A549 (cell line): ENCODE measurements at regions of chr3 and their contacts with region 1.

Region 1: GRCh38 chr3:14203521-14204079 is 25.0 kb downstream of the LSM3 start:
- DNase-seq: peak; percentile 79
- ATAC-seq: peak; percentile 84 to 92
- H3K4me3 ChIP-seq: no peak overlapping the region
- H3K27ac ChIP-seq: no peak overlapping the region
- H3K4me1 ChIP-seq: no peaks in the 10 kb centered on the region
- CTCF ChIP-seq: peak; percentile 86
- EP300 ChIP-seq: no peak
- POLR2A ChIP-seq: no peak
- RAD21 ChIP-seq: peak; percentile 83 to 86

Region 2: DNA sequence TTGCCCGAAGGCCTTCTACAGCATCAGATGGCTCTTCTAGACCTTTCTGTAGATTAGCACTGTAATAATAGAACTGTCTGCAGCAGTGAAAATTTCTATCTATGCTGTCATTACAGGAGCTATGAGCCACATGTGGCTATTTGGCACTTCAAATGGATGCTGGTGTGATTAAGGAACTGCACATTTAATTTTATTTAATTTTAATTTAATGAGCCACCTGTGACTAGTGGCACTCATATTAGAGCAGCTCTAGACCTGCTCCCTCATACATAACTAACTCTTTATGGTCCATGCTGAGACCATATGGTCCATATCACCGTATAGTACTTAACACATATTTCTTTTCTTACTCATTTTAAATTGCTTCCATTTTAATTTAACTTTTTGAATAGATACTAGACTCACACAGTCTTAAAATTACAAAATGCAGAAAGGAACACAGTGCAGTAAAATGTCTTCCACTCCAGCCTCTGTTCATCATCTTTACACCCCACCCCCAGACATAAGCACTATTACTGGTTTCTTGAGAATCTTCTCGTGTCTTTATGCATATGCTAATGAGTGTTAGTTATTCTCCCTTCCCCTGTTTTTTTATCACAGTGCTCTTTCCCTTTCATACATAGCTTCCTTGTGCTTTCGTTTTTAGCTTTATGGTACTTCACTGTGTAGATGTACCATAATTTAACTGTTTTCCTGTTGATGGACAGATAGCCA is 15.4 kb before region 1 on chr3:
- CTCF ChIA-PET with region 1: interaction called, 20 read pairs
- POLR2A ChIA-PET with region 1: no interaction called
- DNase-seq: no peak
- ATAC-seq: no peak
- H3K4me3 ChIP-seq: no peak overlapping the region
- H3K27ac ChIP-seq: no peak overlapping the region
- H3K4me1 ChIP-seq: no peaks in the 10 kb centered on the region
- CTCF ChIP-seq: no peak
- EP300 ChIP-seq: no peak
- POLR2A ChIP-seq: no peak
- RAD21 ChIP-seq: no peak

Region 3: GRCh38 chr3:14243782-14244181 is 40.2 kb after region 1 on chr3:
- CTCF ChIA-PET with region 1: interaction called, 22 read pairs
- POLR2A ChIA-PET with region 1: no interaction called
- DNase-seq: no peak
- ATAC-seq: no peak
- H3K4me3 ChIP-seq: no peak overlapping the region
- H3K27ac ChIP-seq: no peak overlapping the region
- H3K4me1 ChIP-seq: no peaks in the 10 kb centered on the region
- CTCF ChIP-seq: no peak
- EP300 ChIP-seq: no peak
- POLR2A ChIP-seq: no peak
- RAD21 ChIP-seq: no peak

Region 4: GRCh38 chr3:14319654-14320182 is 116.1 kb after region 1 on chr3:
- CTCF ChIA-PET with region 1: no interaction called
- POLR2A ChIA-PET with region 1: no interaction called
- DNase-seq: peak; percentile 83 to 89
- ATAC-seq: peak; percentile 84 to 99
- H3K4me3 ChIP-seq: no peak overlapping the region
- H3K27ac ChIP-seq: peak overlapping the region in 1 of 2 experiments; percentile 71; a peak in 4 of 6 replicates
- H3K4me1 ChIP-seq: peaks cover 3% of the 10 kb centered on the region; the same call in 1 of the 3 replicates
- CTCF ChIP-seq: no peak
- EP300 ChIP-seq: no peak
- POLR2A ChIP-seq: no peak
- RAD21 ChIP-seq: no peak

Region 5: DNA sequence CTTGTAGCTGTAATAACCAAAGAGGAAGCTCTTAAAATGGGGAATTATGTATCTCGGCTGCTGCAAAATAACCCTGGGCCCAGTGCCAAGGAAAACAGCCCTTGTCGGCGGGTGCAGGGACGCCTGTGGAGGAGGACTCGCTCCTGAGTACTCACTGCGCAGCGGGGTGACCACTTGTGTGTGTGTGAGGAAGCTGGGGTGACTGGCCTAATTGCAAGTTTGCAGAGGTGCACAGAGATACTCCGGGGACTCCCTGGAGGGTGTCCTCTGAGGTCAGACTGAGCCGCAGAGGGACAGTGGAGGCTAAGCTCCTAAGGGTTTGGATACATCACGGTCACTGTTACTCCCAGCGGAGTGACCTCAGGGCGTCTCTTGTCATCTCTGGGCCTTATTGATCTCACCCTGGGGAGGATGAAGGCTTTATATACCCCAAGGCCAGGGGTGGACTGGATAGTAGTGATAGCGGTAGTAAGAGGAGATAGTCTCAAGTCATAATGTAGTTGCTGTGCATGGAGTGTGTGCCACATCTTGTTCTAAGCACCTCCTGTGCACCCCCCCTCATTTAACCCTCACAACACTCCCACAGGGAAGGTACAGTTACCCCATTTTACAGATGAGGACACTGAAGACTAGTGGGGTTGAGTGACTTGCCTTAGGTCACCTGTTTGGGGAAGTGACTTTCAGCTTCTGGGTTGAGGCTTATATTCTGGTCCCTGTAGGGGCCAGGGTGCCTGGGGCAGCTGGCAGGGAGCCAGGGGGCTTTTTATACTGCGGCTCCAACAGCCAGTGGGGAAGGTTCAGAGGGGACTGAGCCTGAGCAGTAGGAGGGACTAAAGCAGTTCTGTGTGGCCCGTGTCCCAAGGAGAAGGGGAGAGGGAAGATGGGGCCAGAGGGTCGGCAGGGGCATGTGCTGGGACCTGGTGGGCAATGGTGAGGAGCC is 236.2 kb after region 1 on chr3:
- CTCF ChIA-PET with region 1: interaction called, 11 read pairs
- POLR2A ChIA-PET with region 1: no interaction called
- DNase-seq: no peak
- ATAC-seq: peak in 1 of 2 experiments; percentile 10; a peak in 2 of 6 replicates
- H3K4me3 ChIP-seq: no peak overlapping the region
- H3K27ac ChIP-seq: peak overlapping the region; percentile 11 to 68; a peak in 4 of 6 replicates
- H3K4me1 ChIP-seq: peaks cover 72% of the 10 kb centered on the region
- CTCF ChIP-seq: no peak
- EP300 ChIP-seq: no peak
- POLR2A ChIP-seq: no peak
- RAD21 ChIP-seq: no peak

Region 6: GRCh38 chr3:14508961-14509795 is 305.6 kb after region 1 on chr3:
- CTCF ChIA-PET with region 1: interaction called, 12 read pairs
- POLR2A ChIA-PET with region 1: no interaction called
- DNase-seq: peak; percentile 48 to 81
- ATAC-seq: peak; percentile 69 to 87
- H3K4me3 ChIP-seq: no peak overlapping the region
- H3K27ac ChIP-seq: peak overlapping the region in 1 of 2 experiments; percentile 31; a peak in 1 of 6 replicates
- H3K4me1 ChIP-seq: no peaks in the 10 kb centered on the region
- CTCF ChIP-seq: peak; percentile 92
- EP300 ChIP-seq: no peak
- POLR2A ChIP-seq: no peak
- RAD21 ChIP-seq: peak; percentile 80 to 91